HepG2 (cell line): ENCODE measurements at regions of chr10 and their contacts with region 1.

Region 1: DNA sequence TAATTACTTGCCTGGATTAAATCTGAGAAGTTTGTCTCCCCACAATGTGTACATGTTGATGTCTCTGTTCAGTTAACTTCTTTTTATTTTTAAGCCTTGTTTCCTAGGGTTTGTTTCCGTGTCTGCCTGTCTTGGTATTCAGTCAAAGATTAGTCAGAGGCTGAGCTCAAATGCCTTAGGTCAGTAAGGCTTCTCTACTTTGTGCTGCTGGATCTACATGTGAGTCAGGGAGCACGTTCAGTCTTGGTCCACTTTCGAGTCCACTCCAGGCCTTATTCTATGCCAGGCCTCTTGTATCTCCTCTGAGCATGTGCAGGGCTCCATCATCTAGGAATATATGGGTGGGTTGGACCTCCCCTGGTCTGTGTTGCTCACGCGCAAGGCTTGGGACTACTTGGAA is 93.3 kb upstream of the FZD8 start:
- DNase-seq: no peak
- ATAC-seq: no peak
- H3K4me3 ChIP-seq: no peak overlapping the region
- H3K27ac ChIP-seq: no peak overlapping the region
- H3K4me1 ChIP-seq: no peaks in the 10 kb centered on the region
- H3K27me3 ChIP-seq: no peaks in the 10 kb centered on the region
- CTCF ChIP-seq: no peak
- EP300 ChIP-seq: no peak
- POLR2A ChIP-seq: no peak
- RAD21 ChIP-seq: no peak

Region 2: GRCh38 chr10:35720366-35720765 is 15.0 kb before region 1 on chr10:
- CTCF ChIA-PET with region 1: no interaction called
- POLR2A ChIA-PET with region 1: no interaction called
- in situ Hi-C with region 1: no loop called
- intact Hi-C with region 1: loop called (anchors 1 kb)
- DNase-seq: no peak
- ATAC-seq: no peak
- H3K4me3 ChIP-seq: no peak overlapping the region
- H3K27ac ChIP-seq: no peak overlapping the region
- H3K4me1 ChIP-seq: no peaks in the 10 kb centered on the region
- H3K27me3 ChIP-seq: no peaks in the 10 kb centered on the region
- CTCF ChIP-seq: no peak
- EP300 ChIP-seq: no peak
- POLR2A ChIP-seq: no peak
- RAD21 ChIP-seq: no peak